GM10248 (cell line): ENCODE measurements at regions of chr6 and their contacts with region 1.

Region 1: GRCh38 chr6:32413427-32414047 is 6.6 kb upstream of the BTNL2 start:
- DNase-seq: peak; percentile 80
- CTCF ChIP-seq: peak; percentile 92

Region 2: GRCh38 chr6:32244946-32245398 is 168.6 kb before region 1 on chr6:
- CTCF ChIA-PET with region 1: interaction called, 11 read pairs
- POLR2A ChIA-PET with region 1: no interaction called
- DNase-seq: peak; percentile 83
- CTCF ChIP-seq: peak; percentile 95

Region 3: DNA sequence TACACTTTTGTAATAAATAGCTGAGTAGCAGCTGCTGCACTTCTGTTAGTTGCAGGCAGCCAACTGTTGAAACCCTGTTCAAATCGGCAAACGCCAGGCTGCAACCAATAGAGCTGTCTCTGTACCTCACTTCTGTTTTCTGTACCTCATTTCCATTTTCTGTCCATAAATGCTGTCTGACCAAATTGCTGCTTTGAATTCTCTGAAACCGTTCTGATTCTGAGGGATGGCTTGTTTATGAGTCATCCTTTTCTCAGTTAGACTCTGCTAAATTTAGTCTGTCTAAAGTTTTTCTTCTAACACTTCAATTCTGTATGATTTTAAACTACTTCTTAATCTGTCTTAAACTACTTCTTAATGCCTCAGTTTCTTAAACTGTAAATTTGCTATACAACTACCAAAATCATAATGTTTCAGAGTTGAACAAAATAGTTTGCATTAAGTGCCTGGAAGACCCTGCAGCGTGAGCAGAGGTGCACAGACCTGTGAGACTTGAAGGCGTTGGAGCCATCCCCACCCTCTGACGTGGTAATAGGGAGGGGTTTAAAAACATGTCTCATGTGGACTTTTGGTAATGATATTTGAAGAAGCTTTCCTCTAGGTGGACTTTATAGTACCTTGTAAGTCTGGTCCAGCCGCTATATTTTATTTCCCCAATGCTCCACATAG is 16.2 kb before region 1 on chr6:
- CTCF ChIA-PET with region 1: interaction called, 125 read pairs
- POLR2A ChIA-PET with region 1: no interaction called
- DNase-seq: peak; percentile 62
- CTCF ChIP-seq: no peak

Region 4: DNA sequence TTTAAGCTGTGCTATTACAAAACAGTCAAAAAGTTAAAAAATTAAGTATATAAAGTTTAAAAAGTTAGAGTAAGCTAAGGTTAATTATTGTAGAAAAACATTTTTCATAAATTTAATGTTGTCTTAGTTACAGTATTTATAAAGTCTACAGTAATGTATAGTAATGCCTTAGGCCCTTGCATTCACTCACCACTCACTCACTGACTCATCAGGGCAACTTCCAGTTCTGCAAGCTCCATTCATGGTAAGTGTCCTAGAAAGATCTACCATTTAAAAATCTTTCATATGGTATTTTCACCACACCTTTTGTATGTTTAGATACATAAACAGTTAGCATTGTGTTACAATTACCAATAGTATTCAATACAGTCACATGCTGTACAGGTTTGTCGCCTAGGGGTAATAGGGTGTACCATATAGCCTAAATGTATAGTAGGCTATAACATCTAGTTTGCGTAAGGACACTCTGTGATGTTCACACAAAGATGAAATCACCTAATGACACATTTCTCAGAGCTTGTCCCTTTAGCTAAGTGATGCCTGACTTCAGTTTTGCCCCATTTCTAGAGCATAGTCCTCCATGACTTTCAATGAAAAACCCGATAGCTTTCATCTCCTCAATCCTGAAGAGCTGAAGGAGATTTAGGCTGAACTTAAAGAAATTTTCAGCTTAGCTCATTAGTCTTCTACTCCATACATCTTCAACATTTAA is 11.2 kb after region 1 on chr6:
- CTCF ChIA-PET with region 1: interaction called, 44 read pairs
- POLR2A ChIA-PET with region 1: no interaction called
- DNase-seq: no peak
- CTCF ChIP-seq: no peak

Region 5: DNA sequence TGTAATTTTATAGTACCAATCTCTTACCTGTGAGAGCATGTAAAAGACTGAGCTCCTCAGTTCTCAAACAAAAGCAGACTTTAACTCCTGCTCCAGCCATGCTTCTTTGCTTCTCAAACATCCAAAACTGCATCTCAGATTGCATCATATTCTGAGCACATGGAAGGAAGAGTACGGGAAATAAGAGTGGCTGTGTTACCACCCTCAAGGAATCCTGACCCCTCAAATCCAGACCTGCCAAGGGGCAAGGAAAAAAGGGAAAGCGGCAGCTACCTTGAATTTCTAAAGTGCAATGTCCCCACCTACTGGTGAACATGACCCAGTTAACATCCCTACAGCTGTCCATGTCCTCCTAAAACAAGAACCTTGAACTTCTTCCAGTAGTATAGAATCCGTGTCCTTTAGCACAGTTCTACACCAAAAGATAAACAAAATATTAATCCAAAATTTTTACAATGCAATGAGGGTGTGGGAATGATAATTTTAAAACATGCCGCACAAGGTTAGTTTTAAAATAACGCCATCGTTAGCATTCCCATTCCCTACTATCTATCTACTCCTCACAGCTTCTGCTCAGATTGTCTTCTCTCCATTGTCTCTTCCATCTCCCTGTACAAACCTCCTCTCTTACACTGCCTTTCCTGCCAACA is 287.0 kb after region 1 on chr6:
- CTCF ChIA-PET with region 1: interaction called, 73 read pairs
- POLR2A ChIA-PET with region 1: no interaction called
- DNase-seq: peak; percentile 45
- CTCF ChIP-seq: peak; percentile 67

Region 6: DNA sequence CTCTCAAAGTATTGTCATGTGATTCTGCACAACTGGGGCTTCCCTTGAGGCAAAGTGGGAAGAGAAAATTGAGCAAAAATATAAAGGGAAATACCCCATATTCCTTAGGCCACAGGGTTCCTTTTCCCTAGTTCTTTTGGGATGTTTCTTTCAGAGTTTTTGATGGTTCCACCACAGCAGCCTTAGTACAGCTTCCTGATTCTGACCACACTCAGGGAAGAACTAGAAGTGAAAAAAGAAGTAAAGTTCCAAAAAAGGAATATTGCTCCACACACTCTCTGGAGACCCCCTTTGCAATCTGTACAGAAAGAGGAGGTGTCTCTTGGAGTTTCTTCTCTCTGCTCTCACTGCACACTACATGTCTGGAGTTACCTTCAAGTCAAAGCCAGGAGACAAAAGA is 299.7 kb after region 1 on chr6:
- CTCF ChIA-PET with region 1: interaction called, 15 read pairs
- POLR2A ChIA-PET with region 1: no interaction called
- DNase-seq: no peak
- CTCF ChIP-seq: no peak

Region 7: DNA sequence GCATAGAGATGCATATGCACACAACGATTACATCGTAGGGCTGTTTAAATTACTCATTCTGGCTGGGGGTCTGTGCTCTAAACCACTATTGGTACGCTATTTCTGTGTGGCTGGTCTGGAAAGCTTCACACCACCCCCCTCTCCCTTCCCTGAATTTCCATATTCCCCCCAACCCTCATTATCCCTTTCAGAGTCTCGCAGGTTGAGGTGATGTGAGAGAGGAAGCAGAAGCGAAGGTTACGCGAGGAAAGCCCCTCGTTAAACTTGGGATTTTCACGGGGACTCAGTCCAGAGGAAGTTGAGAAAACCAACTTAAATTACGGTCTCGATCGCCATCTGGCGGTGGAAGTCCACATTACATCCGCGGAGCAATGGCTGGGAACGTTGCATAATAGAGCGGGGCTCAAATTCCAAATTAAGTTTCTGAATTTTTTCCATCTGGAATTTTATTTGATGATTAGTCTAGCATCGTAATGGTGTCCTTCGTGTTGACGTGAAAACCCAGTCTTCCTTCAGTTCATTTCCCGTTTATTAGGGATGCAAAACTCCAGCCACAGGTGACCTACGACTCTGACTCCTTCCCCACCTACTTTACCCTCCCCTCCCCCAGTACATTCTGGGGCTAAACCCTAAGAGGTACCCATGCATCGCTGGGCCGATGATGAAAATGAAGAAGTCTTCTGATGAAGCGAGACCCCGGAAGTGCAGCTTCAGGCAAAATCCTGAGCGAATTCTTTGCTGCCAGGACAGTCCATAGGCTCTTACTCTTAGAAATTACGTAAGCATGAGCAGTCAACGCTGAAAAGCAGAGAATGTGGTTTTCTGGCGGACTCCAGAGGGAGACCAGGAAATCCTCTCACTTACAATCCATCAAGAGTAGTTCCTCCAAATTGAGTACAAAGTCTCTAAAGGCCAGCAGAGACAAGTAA is 383.6 kb after region 1 on chr6:
- CTCF ChIA-PET with region 1: interaction called, 45 read pairs
- POLR2A ChIA-PET with region 1: no interaction called
- DNase-seq: peak; percentile 56
- CTCF ChIP-seq: peak; percentile 73